ENCODE measurements at regions of chr1 and their contacts with region 1.

Region 1: DNA sequence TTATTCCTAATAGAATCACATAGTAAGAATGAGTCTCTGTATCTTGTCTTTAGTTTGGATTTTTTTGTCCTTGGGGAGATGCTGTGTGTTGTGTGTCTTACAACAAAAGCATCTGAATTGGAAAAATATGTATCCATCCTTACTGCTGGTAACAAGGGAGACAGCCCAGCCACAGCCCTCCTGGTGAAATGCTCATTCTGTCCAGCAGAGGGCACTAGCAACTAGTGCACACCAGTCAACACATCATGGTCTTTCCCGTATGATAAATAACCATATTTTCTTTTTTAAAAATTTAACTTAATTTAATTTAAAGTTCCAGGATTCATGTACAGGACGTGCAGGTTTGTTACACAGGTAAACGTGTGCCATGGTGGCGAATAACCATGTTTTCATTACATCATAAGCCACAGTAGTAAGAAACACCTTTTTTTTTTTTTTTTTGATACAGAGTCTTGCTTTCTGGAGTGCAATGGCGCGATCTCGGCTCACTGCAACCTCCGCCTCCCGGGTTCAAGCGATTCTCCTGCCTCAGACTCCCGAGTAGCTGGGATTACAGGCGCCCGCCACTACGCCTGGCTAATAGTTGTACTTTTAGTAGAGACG is 245.1 kb downstream of the PTBP2 start:
- DNase-seq: peak; percentile 71
- ATAC-seq: peak; percentile 61 to 77

Region 2: GRCh38 chr1:97050501-97050900 is 83.9 kb after region 1 on chr1:
- intact Hi-C with region 1: loop called (anchors 5 to 10 kb)
- DNase-seq: no peak
- ATAC-seq: no peak

Region 3: GRCh38 chr1:97084546-97084945 is 117.9 kb after region 1 on chr1:
- intact Hi-C with region 1: no loop called
- DNase-seq: no peak
- ATAC-seq: no peak

Region 4: DNA sequence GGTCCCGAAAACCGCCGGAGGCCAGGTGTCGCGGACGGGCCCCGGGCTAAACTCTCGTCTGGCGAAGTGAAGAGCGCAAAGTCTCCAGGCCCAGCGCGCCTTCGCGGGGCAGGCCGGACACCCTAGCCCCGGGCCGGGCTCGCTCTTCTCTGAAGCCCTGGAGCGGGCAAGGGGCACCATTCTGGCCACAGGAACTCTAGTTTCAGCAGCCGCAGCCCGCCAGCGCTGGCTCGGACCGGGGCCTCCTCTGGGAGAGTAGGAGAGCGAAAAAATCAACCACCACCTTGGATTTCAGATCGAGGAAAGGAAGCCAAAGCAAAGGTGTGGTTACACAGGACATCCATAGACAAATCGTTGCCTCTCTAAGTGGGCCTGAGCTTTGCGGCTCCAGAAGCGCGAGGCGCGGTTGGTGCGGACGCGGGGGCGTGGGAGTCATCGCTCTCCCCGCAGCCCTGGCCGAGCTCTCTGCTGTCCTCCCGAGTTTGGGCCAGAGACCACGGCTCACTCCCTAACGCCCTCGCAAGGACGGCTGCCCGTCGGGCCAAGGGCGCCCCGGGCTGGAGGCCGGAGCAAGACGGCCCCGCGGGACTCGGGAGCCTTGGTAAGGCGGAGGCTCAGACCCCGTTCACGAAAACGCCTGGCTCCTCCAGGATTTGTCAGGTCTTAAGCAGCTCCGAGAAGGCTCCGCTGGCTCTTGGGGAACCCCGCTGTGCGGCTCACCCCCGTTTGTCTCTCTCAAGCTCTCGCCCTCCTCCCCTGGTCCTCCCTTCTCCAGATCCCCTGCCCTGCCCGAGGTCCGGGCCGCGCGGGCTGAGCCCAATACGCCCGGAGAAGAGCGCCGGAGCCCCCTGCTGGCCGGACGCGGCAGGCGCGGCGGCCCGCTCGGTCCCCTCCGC is 1087.1 kb after region 1 on chr1:
- intact Hi-C with region 1: loop called in 1 of 2 experiments (anchors 5 kb)
- DNase-seq: peak; percentile 63
- ATAC-seq: peak; percentile 98 to 99

Region 5: GRCh38 chr1:98468111-98468717 is 1501.6 kb after region 1 on chr1:
- intact Hi-C with region 1: loop called in 1 of 2 experiments (anchors 10 kb)
- DNase-seq: no peak
- ATAC-seq: no peak